ENCODE measurements at regions of chr3 and their contacts with region 1.

Region 1: GRCh38 chr3:44428910-44429309 is 48.6 kb downstream of the ZNF445 start:
- DNase-seq: no peak
- H3K4me3 ChIP-seq: no peak overlapping the region
- H3K27ac ChIP-seq: no peak overlapping the region
- H3K4me1 ChIP-seq: no peaks in the 10 kb centered on the region
- H3K27me3 ChIP-seq: no peaks in the 10 kb centered on the region

Region 2: GRCh38 chr3:44235604-44236484 is 193.1 kb before region 1 on chr3:
- CTCF ChIA-PET with region 1: no interaction called
- POLR2A ChIA-PET with region 1: no interaction called
- DNase-seq: peak; percentile 88 to 93 (median 92)
- H3K4me3 ChIP-seq: peak overlapping the region in 2 of 7 experiments; percentile 34 to 45
- H3K27ac ChIP-seq: peak overlapping the region in 1 of 2 experiments; percentile 59
- H3K4me1 ChIP-seq: peaks cover 2 to 24% (median 15%) of the 10 kb centered on the region in 4 experiments
- H3K27me3 ChIP-seq: no peaks in the 10 kb centered on the region

Region 3: GRCh38 chr3:44439499-44440295 is 10.8 kb after region 1 on chr3:
- CTCF ChIA-PET with region 1: interaction called, 10 read pairs
- POLR2A ChIA-PET with region 1: no interaction called
- DNase-seq: peak; percentile 99 to 100 (median 100)
- H3K4me3 ChIP-seq: peak overlapping the region in 6 of 7 experiments; percentile 30 to 68 (median 44)
- H3K27ac ChIP-seq: peak overlapping the region; percentile 99 to 100
- H3K4me1 ChIP-seq: peaks cover 27 to 56% (median 41%) of the 10 kb centered on the region in 4 experiments
- H3K27me3 ChIP-seq: no peaks in the 10 kb centered on the region